PC-9 (cell line): ENCODE measurements at regions of chr3 and their contacts with region 1.

Region 1: DNA sequence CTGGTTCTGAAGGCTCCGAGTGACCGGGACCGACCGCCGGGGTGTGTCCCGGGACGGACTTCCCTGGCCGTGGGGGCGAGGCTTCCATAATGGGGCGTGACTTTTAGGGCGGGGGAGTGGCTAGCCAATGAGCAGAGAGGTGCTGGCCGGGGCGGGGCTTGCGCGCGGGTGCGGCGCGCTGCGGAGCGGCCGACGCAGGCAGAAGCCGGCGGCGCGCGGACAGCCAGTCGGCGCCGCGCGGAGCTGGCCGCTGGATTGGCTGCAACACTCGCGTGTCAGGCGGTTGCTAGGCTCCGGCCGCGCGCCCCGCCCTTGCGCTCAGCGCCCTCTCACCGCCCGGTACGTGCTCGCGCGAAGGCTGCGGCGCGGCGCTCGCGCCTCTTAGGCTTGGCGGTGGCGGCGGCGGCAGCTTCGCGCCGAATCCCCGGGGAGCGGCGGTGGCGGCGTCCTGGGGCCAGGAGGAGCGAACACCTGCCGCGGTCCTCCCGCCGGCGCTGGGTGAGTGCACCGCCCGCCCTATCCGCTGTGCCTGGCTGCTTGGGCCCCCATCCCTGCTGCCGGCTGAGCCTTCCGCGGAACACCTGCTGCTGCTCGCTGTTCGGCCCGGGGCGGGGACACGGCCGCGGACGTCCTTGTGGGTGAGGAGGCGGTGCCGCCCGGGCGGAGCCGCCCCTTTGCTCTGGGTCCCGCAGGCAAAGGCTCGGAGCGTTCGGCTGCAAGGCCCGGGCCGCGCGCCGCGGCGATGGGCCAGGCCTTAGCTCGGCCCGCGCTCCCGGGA is at the start of gene DAG1:
- DNase-seq: peak; percentile 83 to 98
- H3K4me3 ChIP-seq: peak within 1 kb of the TSS; percentile 98
- H3K27ac ChIP-seq: peak within 1 kb of the TSS; percentile 76
- H3K4me1 ChIP-seq: peaks cover 45% of the 10 kb centered on the region
- H3K27me3 ChIP-seq: no peaks in the 10 kb centered on the region
- CTCF ChIP-seq: no peak
- total RNA-seq, gene DAG1: 156 and 206 TPM in 2 replicates

Region 2: GRCh38 chr3:49484471-49484870 is 14.3 kb after region 1 on chr3:
- CTCF ChIA-PET with region 1: interaction called, 6 read pairs
- POLR2A ChIA-PET with region 1: interaction called, 10 read pairs
- intact Hi-C with region 1: no loop called
- DNase-seq: no peak
- H3K4me3 ChIP-seq: no peak overlapping the region
- H3K27ac ChIP-seq: no peak overlapping the region
- H3K4me1 ChIP-seq: peaks cover 4% of the 10 kb centered on the region
- H3K27me3 ChIP-seq: no peaks in the 10 kb centered on the region
- CTCF ChIP-seq: no peak

Region 3: GRCh38 chr3:49610666-49611280 is 140.6 kb after region 1 on chr3:
- CTCF ChIA-PET with region 1: interaction called, 10 read pairs
- POLR2A ChIA-PET with region 1: no interaction called
- intact Hi-C with region 1: no loop called
- DNase-seq: no peak
- H3K4me3 ChIP-seq: no peak overlapping the region
- H3K27ac ChIP-seq: no peak overlapping the region
- H3K4me1 ChIP-seq: peaks cover 8% of the 10 kb centered on the region; the same call in 1 of the 2 replicates
- H3K27me3 ChIP-seq: no peaks in the 10 kb centered on the region
- CTCF ChIP-seq: no peak

Region 4: DNA sequence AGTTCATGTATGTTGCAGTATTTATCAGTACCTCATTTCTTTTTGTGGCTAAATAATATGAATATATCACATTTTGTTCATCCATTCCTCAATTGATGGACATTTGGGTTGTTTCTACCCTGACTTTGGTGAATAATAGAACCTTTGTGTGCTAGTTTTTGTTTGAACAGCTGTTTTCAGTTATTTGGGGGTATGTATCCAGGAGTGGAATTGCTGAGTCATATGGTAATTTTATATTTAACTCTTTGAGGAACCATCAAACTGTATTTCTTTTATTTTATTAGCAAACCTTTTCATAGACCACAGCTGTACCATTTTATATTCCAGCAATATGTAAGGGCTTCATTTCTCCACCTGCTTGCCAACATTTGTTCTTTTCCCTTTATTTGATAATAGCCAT is 580.2 kb after region 1 on chr3:
- CTCF ChIA-PET with region 1: no interaction called
- POLR2A ChIA-PET with region 1: interaction called, 10 read pairs
- intact Hi-C with region 1: no loop called
- DNase-seq: no peak
- H3K4me3 ChIP-seq: no peak overlapping the region
- H3K27ac ChIP-seq: no peak overlapping the region
- H3K4me1 ChIP-seq: no peaks in the 10 kb centered on the region
- H3K27me3 ChIP-seq: no peaks in the 10 kb centered on the region
- CTCF ChIP-seq: no peak